Gastrocnemius medialis (tissue), 4 donors: ENCODE measurements at regions of chr12 and their contacts with region 1.

Region 1: DNA sequence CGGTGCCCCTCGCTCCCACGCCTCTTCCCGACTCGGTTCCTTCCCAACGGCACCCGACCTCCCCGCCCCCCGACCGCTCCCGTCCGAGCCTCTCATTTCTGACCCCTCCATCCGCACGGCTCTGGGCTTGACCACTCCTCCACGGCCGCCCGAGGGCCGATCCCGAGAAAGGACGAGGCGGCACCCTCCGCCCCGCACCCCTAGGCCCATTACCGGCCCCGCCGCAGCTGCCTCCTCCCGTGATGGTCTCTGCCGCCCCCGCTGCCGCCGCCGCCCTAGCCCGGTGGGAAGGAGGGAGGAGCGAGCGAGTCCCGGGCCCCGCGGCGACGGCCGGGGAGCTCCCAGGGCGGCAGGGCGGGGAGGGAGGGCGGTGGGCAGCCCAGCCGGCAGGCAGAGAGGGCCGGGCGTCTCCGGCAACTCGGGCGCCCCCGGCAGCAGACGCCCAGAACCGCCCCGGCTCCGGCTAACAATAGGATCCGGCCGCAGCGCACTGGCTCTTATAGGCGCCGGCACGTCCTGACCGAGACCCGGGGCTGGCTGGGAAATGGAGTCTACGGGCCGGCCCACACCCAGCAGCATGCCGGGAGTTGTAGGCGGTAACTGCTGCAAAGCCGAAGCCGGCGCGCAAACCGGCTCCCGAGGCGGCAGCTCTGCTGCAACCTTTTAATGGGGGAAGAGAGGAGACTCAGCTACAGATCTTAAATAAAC is at the start of gene CSRNP2:
- DNase-seq: peak; percentile 96
- ATAC-seq: peak; percentile 94 to 96
- H3K4me3 ChIP-seq: peak within 1 kb of the TSS; percentile 91 to 98 (median 94)
- H3K27ac ChIP-seq: peak within 1 kb of the TSS; percentile 87 to 97 (median 94)
- H3K4me1 ChIP-seq: peaks cover 17 to 28% of the 10 kb centered on the region in 2 donors
- H3K27me3 ChIP-seq: no peaks in the 10 kb centered on the region
- CTCF ChIP-seq: peak in 1 of 5 experiments; percentile 12
- POLR2A ChIP-seq: peak; percentile 100
- total RNA-seq, gene CSRNP2: 17.3 to 29.5 (median 22.0) TPM

Region 2: GRCh38 chr12:51217968-51218606 is 134.8 kb after region 1 on chr12 and contains the start of gene POU6F1:
- in situ Hi-C with region 1: no loop called
- intact Hi-C with region 1: loop called (anchors 5 kb)
- DNase-seq: peak; percentile 52 to 77
- ATAC-seq: peak; percentile 87 to 88
- H3K4me3 ChIP-seq: peak within 1 kb of the TSS; percentile 85 to 98 (median 89)
- H3K27ac ChIP-seq: peak within 1 kb of the TSS; percentile 98 to 100 (median 99)
- H3K4me1 ChIP-seq: peaks cover 17 to 19% of the 10 kb centered on the region in 2 donors
- H3K27me3 ChIP-seq: no peaks in the 10 kb centered on the region
- CTCF ChIP-seq: peak; percentile 31 to 92 (median 65)
- POLR2A ChIP-seq: peak; percentile 68 to 74
- total RNA-seq, gene POU6F1: 8.1 to 11.1 (median 9.9) TPM

Region 3: DNA sequence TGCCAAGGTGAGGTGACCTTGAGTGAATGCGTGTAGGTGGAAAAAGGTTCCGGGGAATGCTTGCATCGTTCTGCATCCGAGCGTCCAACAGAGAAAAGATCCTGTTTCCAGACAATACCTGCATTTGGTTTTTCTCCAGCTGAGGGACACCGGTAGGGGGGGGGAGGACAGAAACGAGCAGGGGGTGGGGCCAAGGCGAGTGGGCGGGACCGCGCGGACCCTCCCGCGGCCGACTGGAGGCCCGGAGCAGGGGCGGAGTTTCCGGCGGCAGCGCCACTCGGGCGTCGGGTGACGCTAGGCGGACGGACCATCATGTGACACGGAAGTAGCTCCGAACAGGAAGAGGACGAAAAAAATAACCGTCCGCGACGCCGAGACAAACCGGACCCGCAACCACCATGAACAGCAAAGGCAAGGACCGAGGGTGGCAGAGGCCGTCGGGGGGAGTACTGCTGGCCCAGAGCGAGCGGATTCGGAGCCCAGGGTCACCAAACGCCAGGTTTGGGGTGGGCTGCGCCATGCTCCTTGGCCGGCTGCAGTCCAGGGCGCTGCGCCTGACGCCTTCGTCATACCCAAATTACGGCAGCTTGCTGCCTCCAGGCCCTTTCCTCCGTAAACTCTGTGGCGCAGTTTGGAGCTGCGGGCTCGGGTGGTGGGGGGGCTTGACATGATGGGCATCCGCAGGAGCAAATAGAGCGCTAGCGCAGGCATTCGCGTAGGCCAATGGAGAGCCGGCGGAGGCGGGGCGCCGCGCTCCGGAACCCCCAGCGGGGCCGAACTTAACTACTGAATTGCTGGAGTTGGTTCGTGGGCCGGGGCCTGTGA is 155.4 kb after region 1 on chr12 and contains the start of gene DAZAP2:
- in situ Hi-C with region 1: no loop called
- intact Hi-C with region 1: loop called (anchors 2 kb)
- DNase-seq: peak; percentile 94 to 97
- ATAC-seq: peak; percentile 94 to 96
- H3K4me3 ChIP-seq: peak within 1 kb of the TSS; percentile 94 to 100 (median 97)
- H3K27ac ChIP-seq: peak within 1 kb of the TSS; percentile 98 to 100 (median 100)
- H3K4me1 ChIP-seq: peaks cover 19 to 26% of the 10 kb centered on the region in 2 donors
- H3K27me3 ChIP-seq: no peaks in the 10 kb centered on the region
- CTCF ChIP-seq: peak; percentile 6 to 49 (median 17)
- POLR2A ChIP-seq: peak; percentile 92 to 98
- total RNA-seq, gene DAZAP2: 204 to 274 (median 246) TPM

Region 4: DNA sequence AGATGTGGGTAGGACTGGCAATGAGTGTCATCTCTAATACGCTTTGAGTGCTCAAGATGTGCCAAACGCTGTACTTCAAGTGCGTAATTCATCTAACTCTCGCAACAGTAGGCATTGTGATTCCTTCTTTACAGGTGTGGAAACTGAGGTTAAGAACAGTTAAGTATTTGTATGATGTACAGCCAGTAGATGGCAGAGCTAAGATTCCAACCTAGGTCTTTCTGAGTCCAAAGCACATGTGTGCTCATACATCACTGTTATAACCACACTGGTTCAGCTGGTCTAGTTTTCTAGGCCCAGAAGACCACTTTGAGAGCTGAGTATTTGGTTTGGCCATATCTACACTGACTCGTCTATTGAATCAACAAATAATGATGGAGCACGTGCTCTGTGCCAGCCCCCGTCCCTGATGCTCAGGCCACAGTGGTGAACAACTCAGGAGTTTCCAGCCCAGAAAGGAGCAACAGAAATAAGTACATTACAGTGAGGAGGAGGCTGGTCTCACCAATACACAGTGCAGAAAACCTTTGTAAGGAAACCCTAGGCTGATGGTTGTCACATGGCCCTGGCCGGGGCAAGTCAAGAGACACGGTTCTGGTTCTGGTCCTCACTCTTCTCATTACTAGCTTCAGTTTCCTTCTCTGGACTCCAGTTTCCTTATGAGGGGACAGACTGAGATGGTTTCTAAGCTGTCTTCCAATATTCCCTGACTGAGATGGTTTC is 438.4 kb after region 1 on chr12:
- in situ Hi-C with region 1: no loop called
- intact Hi-C with region 1: no loop called
- DNase-seq: no peak
- ATAC-seq: no peak
- H3K4me3 ChIP-seq: no peak overlapping the region
- H3K27ac ChIP-seq: no peak overlapping the region
- H3K4me1 ChIP-seq: no peaks in the 10 kb centered on the region
- H3K27me3 ChIP-seq: no peaks in the 10 kb centered on the region
- CTCF ChIP-seq: no peak
- POLR2A ChIP-seq: no peak